Ovary (tissue), 10 donors: ENCODE measurements at regions of chr9 and their contacts with region 1.

Region 1: GRCh38 chr9:4662108-4662988 is at the start of gene PLPP6:
- DNase-seq: peak; percentile 86 to 90 (median 88)
- H3K4me3 ChIP-seq: peak within 1 kb of the TSS; percentile 84
- H3K27ac ChIP-seq: peak within 1 kb of the TSS; percentile 15 to 49
- H3K4me1 ChIP-seq: peaks cover 6% of the 10 kb centered on the region
- H3K27me3 ChIP-seq: no peaks in the 10 kb centered on the region
- CTCF ChIP-seq: peak; percentile 46 to 58 (median 55)
- EP300 ChIP-seq: no peak
- POLR2A ChIP-seq: peak; percentile 33
- total RNA-seq, gene PLPP6: 4.6 to 10.0 (median 5.2) TPM

Region 2: GRCh38 chr9:5617749-5618148 is 955.4 kb after region 1 on chr9:
- intact Hi-C with region 1: loop called in 2 of 4 experiments (anchors 10 kb)
- DNase-seq: no peak
- H3K4me3 ChIP-seq: no peak overlapping the region
- H3K27ac ChIP-seq: no peak overlapping the region
- H3K4me1 ChIP-seq: no peaks in the 10 kb centered on the region
- H3K27me3 ChIP-seq: no peaks in the 10 kb centered on the region
- CTCF ChIP-seq: no peak
- EP300 ChIP-seq: no peak
- POLR2A ChIP-seq: no peak